ENCODE measurements at regions of chr4 and their contacts with region 1.

Region 1: DNA sequence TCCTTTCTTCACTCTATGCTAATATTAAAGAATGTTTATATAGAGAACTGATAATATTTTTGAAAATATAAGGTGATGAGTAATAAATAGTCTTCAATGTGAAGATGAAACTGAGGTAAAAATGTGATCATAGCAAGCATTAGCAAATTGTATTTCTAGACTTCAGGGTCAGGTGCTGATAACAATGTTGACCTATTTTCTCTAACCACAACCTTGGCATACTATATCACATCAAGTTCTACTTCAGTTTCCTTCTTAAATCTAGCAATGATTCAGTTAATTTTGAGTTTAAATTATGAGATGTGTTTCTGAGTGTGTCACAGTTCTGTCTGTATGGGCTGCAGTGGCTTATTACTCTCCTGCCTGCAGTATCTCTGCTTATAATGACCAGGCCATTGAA is 209.4 kb downstream of the RAPGEF2 start:
- DNase-seq: no peak
- ATAC-seq: no peak
- H3K4me3 ChIP-seq: no peak overlapping the region
- H3K27ac ChIP-seq: no peak overlapping the region
- H3K4me1 ChIP-seq: no peaks in the 10 kb centered on the region
- H3K27me3 ChIP-seq: no peaks in the 10 kb centered on the region
- CTCF ChIP-seq: no peak

Region 2: GRCh38 chr4:158624889-158625478 is 687.3 kb before region 1 on chr4:
- CTCF ChIA-PET with region 1: no interaction called
- POLR2A ChIA-PET with region 1: no interaction called
- in situ Hi-C with region 1: no loop called
- intact Hi-C with region 1: no loop called
- DNase-seq: peak; percentile 27
- ATAC-seq: no peak
- H3K4me3 ChIP-seq: no peak overlapping the region
- H3K27ac ChIP-seq: no peak overlapping the region
- H3K4me1 ChIP-seq: no peaks in the 10 kb centered on the region
- H3K27me3 ChIP-seq: no peaks in the 10 kb centered on the region
- CTCF ChIP-seq: peak; percentile 62; the same call in 1 of the 2 replicates

Region 3: DNA sequence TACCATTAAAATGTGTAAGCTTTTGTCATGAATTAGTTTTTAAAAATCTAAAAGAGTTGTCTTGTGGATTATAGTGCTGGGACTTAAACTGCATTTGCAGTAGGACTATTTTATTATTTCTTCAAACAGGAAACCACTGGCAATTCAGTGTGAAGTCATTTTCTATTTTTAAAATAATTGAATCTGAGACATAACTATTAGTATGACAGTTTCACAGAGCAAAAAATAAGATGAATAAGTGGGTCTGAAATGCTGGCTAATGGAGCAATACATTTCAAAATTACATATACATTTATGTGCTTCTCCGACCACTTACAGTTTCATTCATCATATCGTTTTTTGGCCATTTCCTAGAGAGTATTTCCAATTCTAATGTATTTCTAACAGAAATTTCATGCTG is 284.7 kb before region 1 on chr4:
- CTCF ChIA-PET with region 1: no interaction called
- POLR2A ChIA-PET with region 1: no interaction called
- in situ Hi-C with region 1: no loop called
- intact Hi-C with region 1: no loop called
- DNase-seq: no peak
- ATAC-seq: no peak
- H3K4me3 ChIP-seq: no peak overlapping the region
- H3K27ac ChIP-seq: no peak overlapping the region
- H3K4me1 ChIP-seq: no peaks in the 10 kb centered on the region
- H3K27me3 ChIP-seq: no peaks in the 10 kb centered on the region
- CTCF ChIP-seq: no peak

Region 4: GRCh38 chr4:159420162-159421057 is 108.2 kb after region 1 on chr4:
- CTCF ChIA-PET with region 1: no interaction called
- POLR2A ChIA-PET with region 1: no interaction called
- in situ Hi-C with region 1: no loop called
- intact Hi-C with region 1: no loop called
- DNase-seq: no peak
- ATAC-seq: no peak
- H3K4me3 ChIP-seq: no peak overlapping the region
- H3K27ac ChIP-seq: no peak overlapping the region
- H3K4me1 ChIP-seq: no peaks in the 10 kb centered on the region
- H3K27me3 ChIP-seq: no peaks in the 10 kb centered on the region
- CTCF ChIP-seq: no peak

Region 5: DNA sequence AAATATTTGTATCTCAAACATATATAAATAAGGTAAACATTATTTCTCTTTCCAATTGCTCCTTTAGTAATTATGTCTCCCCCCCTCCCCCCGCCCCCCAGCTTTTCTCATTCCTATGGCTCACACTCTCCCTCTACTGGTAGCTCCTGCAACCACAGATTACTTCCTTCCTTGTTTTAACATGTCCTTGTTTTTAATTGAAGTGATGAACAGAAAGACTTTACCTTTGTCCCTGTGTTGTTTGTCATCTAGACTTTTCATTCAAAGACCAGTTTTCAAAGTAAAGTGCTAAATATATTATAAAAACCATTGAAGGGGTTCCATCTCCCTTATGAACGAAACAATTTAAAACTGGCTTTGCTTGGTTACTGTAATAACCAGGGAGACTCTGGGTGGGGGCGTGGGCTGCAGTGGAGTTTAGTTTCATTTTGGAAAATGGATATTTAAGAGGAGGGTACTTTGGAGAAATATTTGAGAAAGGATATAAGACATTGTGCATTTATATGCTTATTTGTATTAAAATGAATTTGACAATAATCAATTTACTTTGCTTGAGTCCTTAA is 143.5 kb after region 1 on chr4:
- CTCF ChIA-PET with region 1: interaction called, 11 read pairs
- POLR2A ChIA-PET with region 1: no interaction called
- in situ Hi-C with region 1: no loop called
- intact Hi-C with region 1: no loop called
- DNase-seq: peak; percentile 36
- ATAC-seq: peak; percentile 78
- H3K4me3 ChIP-seq: peak overlapping the region; percentile 36 to 50
- H3K27ac ChIP-seq: no peak overlapping the region
- H3K4me1 ChIP-seq: no peaks in the 10 kb centered on the region
- H3K27me3 ChIP-seq: no peaks in the 10 kb centered on the region
- CTCF ChIP-seq: peak; percentile 81